Gastrocnemius medialis (tissue), 4 donors: ENCODE measurements at regions of chr18 and their contacts with region 1.

Region 1: DNA sequence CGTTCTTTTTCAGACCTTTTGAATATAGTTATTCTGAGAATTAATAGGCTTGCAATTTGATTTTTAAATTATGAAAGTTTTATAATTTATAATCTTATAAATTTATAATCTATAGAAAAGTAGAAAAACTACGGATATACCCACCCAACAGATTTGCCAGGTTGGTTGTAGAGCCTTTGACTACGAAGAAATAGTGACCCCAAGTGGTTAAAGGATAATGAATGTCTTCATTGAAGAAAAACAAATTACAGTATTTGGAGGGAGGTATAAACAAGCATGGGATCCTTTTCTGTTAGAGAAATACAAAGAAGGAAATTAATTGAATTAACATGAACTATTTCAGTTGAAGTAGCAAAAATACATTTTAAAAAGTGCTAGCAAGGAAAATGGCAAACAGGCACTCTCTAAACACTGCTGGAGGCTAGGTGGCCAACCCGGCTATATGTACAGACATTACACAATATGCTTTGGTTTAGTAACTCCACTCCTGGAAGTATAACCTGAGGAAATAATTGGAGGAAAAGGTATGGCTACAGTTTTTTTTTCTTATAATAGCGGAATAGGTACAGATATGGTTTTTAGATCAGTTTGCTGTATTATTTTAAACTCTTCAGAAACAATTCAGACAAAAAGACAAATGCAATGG is 110.9 kb downstream of the MIB1 start:
- DNase-seq: no peak
- ATAC-seq: peak in 1 of 2 donors; percentile 78
- H3K4me3 ChIP-seq: peak overlapping the region in 2 of 4 donors; percentile 23 to 35
- H3K27ac ChIP-seq: no peak overlapping the region
- H3K4me1 ChIP-seq: peaks cover 9 to 22% of the 10 kb centered on the region in 2 donors
- H3K27me3 ChIP-seq: no peaks in the 10 kb centered on the region
- CTCF ChIP-seq: peak in 3 of 5 experiments; percentile 25 to 67 (median 51)
- POLR2A ChIP-seq: no peak

Region 2: DNA sequence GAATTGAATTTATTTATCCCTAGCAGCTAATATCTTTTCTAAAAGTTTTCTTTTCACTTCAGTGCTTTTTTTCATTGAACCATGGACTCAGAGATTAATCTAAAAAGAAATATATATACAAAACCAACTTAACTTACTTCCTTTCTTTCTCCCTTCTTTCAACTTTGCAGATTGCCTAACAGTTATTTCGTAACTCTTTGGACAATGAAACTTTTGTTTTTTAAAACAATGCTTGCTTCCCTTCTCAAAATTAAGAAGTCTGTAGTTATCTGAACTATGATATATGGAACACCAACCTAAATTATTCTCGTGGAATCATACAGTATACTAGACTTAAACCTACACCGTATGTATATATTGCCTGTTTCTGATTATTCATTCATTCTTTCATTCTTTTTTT is 48.0 kb before region 1 on chr18:
- in situ Hi-C with region 1: no loop called
- intact Hi-C with region 1: loop called (anchors 10 kb)
- DNase-seq: no peak
- ATAC-seq: no peak
- H3K4me3 ChIP-seq: no peak overlapping the region
- H3K27ac ChIP-seq: no peak overlapping the region
- H3K4me1 ChIP-seq: peaks cover 18 to 22% of the 10 kb centered on the region in 2 donors
- H3K27me3 ChIP-seq: no peaks in the 10 kb centered on the region
- CTCF ChIP-seq: no peak
- POLR2A ChIP-seq: no peak

Region 3: DNA sequence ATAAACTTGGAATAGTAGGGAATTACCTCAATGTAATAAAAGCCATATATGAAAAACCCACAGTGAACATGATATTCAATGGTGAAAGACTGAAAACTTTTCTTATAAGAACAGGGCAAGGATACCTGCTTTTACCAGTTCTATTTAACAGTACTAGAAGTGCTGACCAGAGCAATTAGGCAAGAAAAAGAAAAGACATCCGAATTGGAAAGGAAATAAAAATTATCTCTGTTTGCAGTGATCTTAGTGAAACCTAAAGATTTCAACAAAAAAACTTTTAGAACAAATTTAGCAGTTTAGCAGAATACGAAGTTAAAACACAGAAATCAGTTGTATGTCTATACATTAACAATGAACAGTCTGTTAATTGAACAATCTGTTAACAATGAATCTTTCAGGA is 41.7 kb before region 1 on chr18:
- in situ Hi-C with region 1: loop called in 1 of 4 experiments (anchors 5 kb)
- intact Hi-C with region 1: loop called (anchors 10 kb)
- DNase-seq: no peak
- ATAC-seq: no peak
- H3K4me3 ChIP-seq: no peak overlapping the region
- H3K27ac ChIP-seq: no peak overlapping the region
- H3K4me1 ChIP-seq: no peaks in the 10 kb centered on the region
- H3K27me3 ChIP-seq: no peaks in the 10 kb centered on the region
- CTCF ChIP-seq: no peak
- POLR2A ChIP-seq: no peak

Region 4: DNA sequence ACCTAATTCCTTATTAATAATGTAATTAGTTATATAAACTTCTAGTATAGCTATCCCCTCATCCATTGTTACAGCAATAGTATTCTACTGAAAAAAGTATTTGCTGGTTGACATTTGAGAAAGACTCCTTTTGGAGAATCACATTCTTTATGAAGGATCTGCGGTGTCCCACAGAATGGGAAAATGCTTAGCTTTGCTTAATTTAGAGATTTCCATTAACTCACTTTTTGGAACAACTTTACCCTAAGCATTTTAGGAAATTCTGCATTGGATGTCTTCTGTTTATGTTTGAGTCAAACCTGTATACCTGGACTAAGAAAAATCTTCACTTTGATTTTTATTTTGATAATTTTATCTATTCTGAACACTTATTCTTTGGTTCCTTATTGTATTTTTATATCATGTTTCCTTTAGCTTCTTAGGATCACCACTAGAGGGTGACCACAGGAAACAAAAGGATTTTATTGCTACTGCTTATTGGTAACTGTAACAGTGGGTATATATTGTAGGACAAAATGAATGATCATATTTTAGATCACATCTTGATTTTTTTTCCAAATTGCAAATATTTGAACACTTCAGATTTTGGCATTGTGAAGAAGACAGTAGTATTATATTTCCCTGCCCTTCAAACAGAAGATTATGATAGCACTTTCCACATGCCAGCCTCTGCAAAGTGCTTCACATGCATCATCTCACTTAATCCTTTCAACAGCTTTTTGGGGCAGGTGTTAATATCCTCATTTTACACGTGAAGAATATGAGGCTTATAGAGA is 31.2 kb before region 1 on chr18:
- in situ Hi-C with region 1: no loop called
- intact Hi-C with region 1: loop called (anchors 1 kb)
- DNase-seq: no peak
- ATAC-seq: peak; percentile 46 to 53
- H3K4me3 ChIP-seq: no peak overlapping the region
- H3K27ac ChIP-seq: peak overlapping the region; percentile 12 to 89 (median 76)
- H3K4me1 ChIP-seq: peaks cover 0 to 2% of the 10 kb centered on the region in 2 donors
- H3K27me3 ChIP-seq: no peaks in the 10 kb centered on the region
- CTCF ChIP-seq: peak; percentile 54 to 84 (median 65)
- POLR2A ChIP-seq: no peak

Region 5: DNA sequence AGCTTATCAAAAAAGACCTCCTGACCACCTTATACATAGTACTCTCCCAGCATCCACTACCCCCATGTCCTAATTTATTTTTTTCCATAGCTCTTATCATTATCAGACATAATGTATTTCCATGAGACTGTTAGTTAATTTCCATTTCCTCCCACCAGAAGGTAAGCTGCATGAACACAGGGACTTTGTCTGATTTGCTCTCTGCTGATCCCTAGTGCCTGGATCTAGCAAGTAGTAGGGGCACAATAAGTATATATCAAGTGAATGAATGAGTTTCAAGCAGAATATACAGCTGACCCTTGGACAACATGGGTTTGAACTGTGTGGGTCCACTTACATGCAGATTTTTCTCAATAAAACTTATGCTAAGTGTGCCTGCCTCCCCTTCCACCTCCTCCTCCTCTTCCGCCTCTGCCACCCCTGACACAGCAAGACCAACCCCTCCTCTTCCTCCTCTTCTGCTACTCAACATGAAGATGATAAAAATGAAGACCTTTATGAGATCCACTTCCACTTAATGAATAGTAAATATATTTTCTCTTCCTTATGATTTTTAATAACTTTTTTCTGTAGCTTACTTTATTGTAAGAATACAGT is 512.5 kb after region 1 on chr18:
- in situ Hi-C with region 1: no loop called
- intact Hi-C with region 1: no loop called
- DNase-seq: no peak
- ATAC-seq: no peak
- H3K4me3 ChIP-seq: no peak overlapping the region
- H3K27ac ChIP-seq: no peak overlapping the region
- H3K4me1 ChIP-seq: no peaks in the 10 kb centered on the region
- H3K27me3 ChIP-seq: no peaks in the 10 kb centered on the region
- CTCF ChIP-seq: no peak
- POLR2A ChIP-seq: no peak